ENCODE measurements at regions of chr3 and their contacts with region 1.

Region 1: GRCh38 chr3:124905849-124906248 is 18.7 kb upstream of the ITGB5 start:
- DNase-seq: no peak
- ATAC-seq: no peak
- H3K4me3 Mint-ChIP-seq: no peak overlapping the region
- H3K27ac Mint-ChIP-seq: no peak overlapping the region
- H3K4me1 Mint-ChIP-seq: peaks cover under 1% of the 10 kb centered on the region
- H3K27me3 Mint-ChIP-seq: peaks cover 5% of the 10 kb centered on the region
- CTCF ChIP-seq: no peak

Region 2: DNA sequence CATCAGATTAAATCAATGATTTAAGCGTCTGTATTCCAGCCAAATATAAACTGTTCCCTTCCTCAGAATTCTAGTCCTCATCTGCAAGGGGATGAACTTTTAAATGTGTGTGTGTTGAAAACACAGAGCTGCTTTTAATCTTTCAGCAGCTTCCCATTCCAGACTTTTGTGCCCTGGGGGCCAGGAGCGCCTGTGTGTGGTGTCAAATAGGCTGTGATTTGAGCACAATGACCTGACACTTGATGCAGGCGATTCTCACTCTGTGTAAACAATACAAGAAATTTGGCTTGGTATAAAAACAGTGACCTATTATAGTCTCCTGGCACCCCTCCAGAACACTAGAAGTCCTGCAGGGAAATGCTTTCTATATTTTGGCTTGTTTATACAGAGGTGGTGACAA is 639.4 kb before region 1 on chr3:
- CTCF ChIA-PET with region 1: no interaction called
- POLR2A ChIA-PET with region 1: no interaction called
- intact Hi-C with region 1: no loop called
- DNase-seq: no peak
- ATAC-seq: no peak
- H3K4me3 Mint-ChIP-seq: no peak overlapping the region
- H3K27ac Mint-ChIP-seq: no peak overlapping the region
- H3K4me1 Mint-ChIP-seq: no peaks in the 10 kb centered on the region
- H3K27me3 Mint-ChIP-seq: peaks cover 2% of the 10 kb centered on the region
- CTCF ChIP-seq: no peak

Region 3: GRCh38 chr3:124768812-124769211 is 137.0 kb before region 1 on chr3:
- CTCF ChIA-PET with region 1: interaction called, 231 read pairs
- POLR2A ChIA-PET with region 1: no interaction called
- intact Hi-C with region 1: no loop called
- DNase-seq: peak; percentile 46
- ATAC-seq: peak; percentile 73
- H3K4me3 Mint-ChIP-seq: no peak overlapping the region
- H3K27ac Mint-ChIP-seq: no peak overlapping the region
- H3K4me1 Mint-ChIP-seq: no peaks in the 10 kb centered on the region
- H3K27me3 Mint-ChIP-seq: peaks cover 5% of the 10 kb centered on the region
- CTCF ChIP-seq: no peak

Region 4: DNA sequence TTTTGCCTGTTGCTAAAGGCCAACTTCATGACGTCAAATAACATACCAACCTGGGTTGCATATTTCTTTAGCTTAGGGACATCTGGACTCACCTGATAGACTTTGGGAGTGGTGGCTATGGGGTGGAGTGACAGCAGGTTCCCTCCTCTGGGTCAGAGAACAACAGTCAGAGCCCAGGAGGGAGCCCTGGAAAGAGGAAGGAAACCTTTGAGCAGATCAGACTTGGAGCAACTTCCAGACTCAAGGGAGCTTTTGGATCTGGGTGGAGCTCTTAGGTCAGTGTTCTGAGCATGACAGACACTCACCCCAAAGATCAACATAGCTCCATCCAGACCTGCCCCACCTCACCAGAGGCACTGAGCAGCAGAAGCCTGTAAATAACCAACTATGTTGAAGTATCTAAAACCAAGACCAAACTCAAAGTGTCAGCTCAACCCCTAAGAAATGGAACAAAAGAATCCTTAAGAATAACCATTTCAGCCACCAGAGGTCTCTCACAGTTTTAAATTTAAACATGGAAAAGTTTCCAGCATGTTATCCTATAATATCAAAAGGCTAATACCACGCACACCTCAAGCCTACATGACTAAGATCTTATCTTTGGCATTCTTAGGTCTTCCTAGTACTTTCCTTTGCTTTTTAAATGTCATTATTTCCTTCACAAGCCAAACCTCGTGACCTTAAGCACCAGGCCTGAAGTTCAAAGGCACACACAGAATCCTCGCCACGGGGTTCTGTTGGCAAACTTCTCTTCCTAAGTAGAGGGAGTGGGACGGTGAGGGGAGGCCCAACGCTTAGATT is 119.2 kb before region 1 on chr3:
- CTCF ChIA-PET with region 1: interaction called, 45 read pairs
- POLR2A ChIA-PET with region 1: no interaction called
- intact Hi-C with region 1: no loop called
- DNase-seq: no peak
- ATAC-seq: no peak
- H3K4me3 Mint-ChIP-seq: no peak overlapping the region
- H3K27ac Mint-ChIP-seq: no peak overlapping the region
- H3K4me1 Mint-ChIP-seq: peaks cover 4% of the 10 kb centered on the region
- H3K27me3 Mint-ChIP-seq: peaks cover 3% of the 10 kb centered on the region
- CTCF ChIP-seq: no peak

Region 5: DNA sequence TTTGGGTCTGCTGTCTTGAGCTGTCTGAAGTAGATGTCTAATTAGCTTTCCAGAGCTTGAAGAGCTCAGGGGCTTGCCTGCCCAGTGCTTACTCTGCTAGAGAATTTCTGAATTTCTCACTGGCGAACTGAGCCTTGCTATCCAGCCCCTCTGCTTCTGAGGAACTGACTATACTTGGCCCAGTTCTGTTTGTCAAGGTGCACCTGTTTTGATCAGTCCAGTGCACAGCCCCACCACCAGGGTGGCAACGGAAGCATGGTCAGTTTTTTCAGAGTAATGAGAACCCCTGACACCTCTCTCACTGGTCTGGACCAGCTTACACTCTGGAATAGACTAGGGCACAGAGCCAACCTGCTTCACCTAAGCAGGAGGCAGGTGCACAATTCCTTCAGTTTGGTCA is 43.8 kb before region 1 on chr3:
- CTCF ChIA-PET with region 1: interaction called, 12 read pairs
- POLR2A ChIA-PET with region 1: no interaction called
- intact Hi-C with region 1: no loop called
- DNase-seq: no peak
- ATAC-seq: no peak
- H3K4me3 Mint-ChIP-seq: no peak overlapping the region
- H3K27ac Mint-ChIP-seq: no peak overlapping the region
- H3K4me1 Mint-ChIP-seq: no peaks in the 10 kb centered on the region
- H3K27me3 Mint-ChIP-seq: peaks cover 1% of the 10 kb centered on the region
- CTCF ChIP-seq: no peak

Region 6: DNA sequence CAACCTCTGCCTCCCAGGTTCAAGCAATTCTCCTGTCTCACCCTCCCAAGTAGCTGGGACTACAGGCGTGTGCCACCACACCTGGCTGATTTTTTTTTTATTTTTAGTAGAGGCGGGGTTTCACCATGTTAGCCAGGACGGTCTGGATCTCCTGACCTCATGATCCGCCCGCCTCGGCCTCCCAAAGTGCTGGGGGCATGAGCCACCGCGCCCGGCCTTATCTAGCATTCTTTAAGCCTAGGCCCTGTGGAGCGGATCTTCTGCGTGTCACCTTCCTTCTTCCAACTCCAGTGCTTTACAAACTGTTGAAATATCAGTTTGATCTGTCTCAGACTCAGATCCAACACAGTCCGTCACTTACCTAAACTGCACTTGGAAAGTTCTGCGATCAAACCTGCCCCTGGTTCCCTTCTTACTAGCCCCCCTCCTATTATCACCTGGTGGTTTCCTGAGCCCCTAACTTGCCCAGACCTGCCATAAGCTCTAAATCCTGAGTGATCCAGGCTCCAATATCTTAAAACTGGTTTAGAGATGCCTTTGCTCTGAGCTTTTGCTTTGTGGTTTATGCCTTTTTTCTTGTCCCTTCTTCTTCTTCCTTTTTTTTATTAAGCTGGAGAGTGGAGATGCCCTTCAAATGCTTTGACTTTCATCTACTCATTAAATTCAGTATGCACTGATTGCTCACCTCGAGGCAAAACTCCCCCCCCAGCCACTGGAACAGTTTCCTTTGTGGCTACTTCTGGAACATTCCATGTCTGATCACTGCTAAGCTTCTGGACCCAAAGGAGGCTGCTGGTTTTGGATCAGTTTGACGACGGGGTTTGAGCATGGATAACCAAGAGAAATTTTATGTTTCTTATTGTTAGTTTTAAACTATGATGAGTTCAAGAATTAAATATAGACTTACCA is 15.3 kb before region 1 on chr3:
- CTCF ChIA-PET with region 1: interaction called, 27 read pairs
- POLR2A ChIA-PET with region 1: interaction called, 7 read pairs
- intact Hi-C with region 1: no loop called
- DNase-seq: no peak
- ATAC-seq: no peak
- H3K4me3 Mint-ChIP-seq: no peak overlapping the region
- H3K27ac Mint-ChIP-seq: no peak overlapping the region
- H3K4me1 Mint-ChIP-seq: peaks cover 7% of the 10 kb centered on the region
- H3K27me3 Mint-ChIP-seq: peaks cover 31% of the 10 kb centered on the region
- CTCF ChIP-seq: no peak

Region 7: GRCh38 chr3:124916837-124917409 is 11.1 kb after region 1 on chr3:
- CTCF ChIA-PET with region 1: interaction called, 28 read pairs
- POLR2A ChIA-PET with region 1: no interaction called
- intact Hi-C with region 1: no loop called
- DNase-seq: no peak
- ATAC-seq: no peak
- H3K4me3 Mint-ChIP-seq: no peak overlapping the region
- H3K27ac Mint-ChIP-seq: no peak overlapping the region
- H3K4me1 Mint-ChIP-seq: no peaks in the 10 kb centered on the region
- H3K27me3 Mint-ChIP-seq: peaks cover 7% of the 10 kb centered on the region
- CTCF ChIP-seq: no peak

Region 8: GRCh38 chr3:124928333-124929202 is 22.7 kb after region 1 on chr3:
- CTCF ChIA-PET with region 1: interaction called, 12 read pairs
- POLR2A ChIA-PET with region 1: no interaction called
- intact Hi-C with region 1: no loop called
- DNase-seq: peak; percentile 85
- ATAC-seq: peak; percentile 55
- H3K4me3 Mint-ChIP-seq: no peak overlapping the region
- H3K27ac Mint-ChIP-seq: no peak overlapping the region
- H3K4me1 Mint-ChIP-seq: peaks cover 5% of the 10 kb centered on the region
- H3K27me3 Mint-ChIP-seq: peaks cover 16% of the 10 kb centered on the region
- CTCF ChIP-seq: peak; percentile 77

Region 9: GRCh38 chr3:125055913-125056745 is 150.3 kb after region 1 on chr3 and contains the start of gene HEG1:
- CTCF ChIA-PET with region 1: no interaction called
- POLR2A ChIA-PET with region 1: no interaction called
- intact Hi-C with region 1: no loop called
- DNase-seq: peak; percentile 84
- ATAC-seq: peak; percentile 63
- H3K4me3 Mint-ChIP-seq: peak within 1 kb of the TSS; percentile 78
- H3K27ac Mint-ChIP-seq: peak within 1 kb of the TSS; percentile 77
- H3K4me1 Mint-ChIP-seq: peaks cover 35% of the 10 kb centered on the region
- H3K27me3 Mint-ChIP-seq: peaks cover 9% of the 10 kb centered on the region
- CTCF ChIP-seq: no peak
- total RNA-seq, gene HEG1: 24.5 to 25.8 TPM